K562 (cell line): ENCODE measurements at regions of chrX and their contacts with region 1.

Region 1: GRCh38 chrX:51420610-51421009 is 75.8 kb downstream of the NUDT11 start:
- DNase-seq: peak; percentile 12 to 39 (median 15)
- ATAC-seq: no peak
- H3K4me3 ChIP-seq: no peak overlapping the region
- H3K27ac ChIP-seq: no peak overlapping the region
- H3K4me1 ChIP-seq: no peaks in the 10 kb centered on the region
- H3K27me3 ChIP-seq: no peaks in the 10 kb centered on the region
- CTCF ChIP-seq: peak; percentile 39 to 59 (median 54); a peak in 5 of 6 replicates
- EP300 ChIP-seq: no peak
- POLR2A ChIP-seq: no peak
- RAD21 ChIP-seq: peak in 1 of 2 experiments; percentile 45; a peak in 2 of 4 replicates

Region 2: GRCh38 chrX:51336584-51336983 is 84.0 kb before region 1 on chrX:
- CTCF ChIA-PET with region 1: no interaction called
- POLR2A ChIA-PET with region 1: no interaction called
- in situ Hi-C with region 1: no loop called
- intact Hi-C with region 1: loop called (anchors 5 kb)
- DNase-seq: peak; percentile 17 to 30 (median 27)
- ATAC-seq: peak; percentile 81
- H3K4me3 ChIP-seq: no peak overlapping the region
- H3K27ac ChIP-seq: no peak overlapping the region
- H3K4me1 ChIP-seq: no peaks in the 10 kb centered on the region
- H3K27me3 ChIP-seq: no peaks in the 10 kb centered on the region; a peak in 1 of 5 replicates
- CTCF ChIP-seq: peak; percentile 41 to 52 (median 50); a peak in 4 of 6 replicates
- EP300 ChIP-seq: no peak
- POLR2A ChIP-seq: no peak
- RAD21 ChIP-seq: no peak; a peak in 1 of 4 replicates

Region 3: DNA sequence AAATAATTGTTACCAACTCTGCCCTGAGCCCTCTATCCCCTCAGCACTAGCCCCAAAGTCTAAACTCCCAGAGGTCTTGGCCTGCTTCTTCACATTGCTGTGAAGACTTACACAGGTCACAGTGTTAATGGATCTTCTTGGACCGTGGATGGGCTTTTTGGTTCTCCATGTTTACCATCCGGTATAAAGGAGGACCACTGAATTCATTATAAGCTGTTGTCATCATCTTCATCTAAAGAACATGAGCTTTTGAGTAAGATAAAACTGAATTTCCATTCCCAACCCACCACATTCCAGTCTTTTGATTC is 67.3 kb after region 1 on chrX:
- CTCF ChIA-PET with region 1: no interaction called
- POLR2A ChIA-PET with region 1: no interaction called
- in situ Hi-C with region 1: no loop called
- intact Hi-C with region 1: no loop called
- DNase-seq: no peak
- ATAC-seq: no peak
- H3K4me3 ChIP-seq: no peak overlapping the region
- H3K27ac ChIP-seq: no peak overlapping the region
- H3K4me1 ChIP-seq: no peaks in the 10 kb centered on the region
- H3K27me3 ChIP-seq: no peaks in the 10 kb centered on the region
- CTCF ChIP-seq: peak in 1 of 3 experiments; percentile 3; a peak in 1 of 6 replicates
- EP300 ChIP-seq: no peak
- POLR2A ChIP-seq: no peak
- RAD21 ChIP-seq: no peak